Calu3 (cell line): ENCODE measurements at regions of chr7 and their contacts with region 1.

Region 1: DNA sequence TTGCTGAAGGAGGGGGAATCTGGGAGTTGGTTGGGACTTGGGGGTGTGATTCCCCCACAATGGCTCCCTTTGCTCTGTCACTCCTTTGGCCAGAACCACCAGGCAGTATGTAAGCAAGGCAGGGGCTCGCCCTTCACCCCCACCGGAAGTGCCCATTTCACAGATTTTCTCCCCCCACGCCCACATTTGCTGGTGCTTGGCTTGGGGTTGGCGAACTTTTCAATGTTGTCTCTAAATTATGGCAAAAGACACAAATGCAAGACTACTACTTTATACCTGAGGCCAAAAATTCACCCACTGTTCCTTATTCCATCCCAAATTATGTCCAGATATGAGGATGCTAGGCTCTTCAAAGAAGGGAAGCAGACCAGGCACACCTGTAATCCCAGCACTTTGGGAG is 24.5 kb downstream of the RBAK start:
- DNase-seq: no peak
- H3K4me3 Mint-ChIP-seq: no peak overlapping the region
- H3K27ac Mint-ChIP-seq: no peak overlapping the region
- H3K4me1 Mint-ChIP-seq: peaks cover 13% of the 10 kb centered on the region
- H3K27me3 Mint-ChIP-seq: peaks cover 35% of the 10 kb centered on the region
- CTCF ChIP-seq: no peak

Region 2: GRCh38 chr7:4945949-4946348 is 124.3 kb before region 1 on chr7:
- CTCF ChIA-PET with region 1: no interaction called
- intact Hi-C with region 1: no loop called
- DNase-seq: no peak
- H3K4me3 Mint-ChIP-seq: no peak overlapping the region
- H3K27ac Mint-ChIP-seq: no peak overlapping the region
- H3K4me1 Mint-ChIP-seq: no peaks in the 10 kb centered on the region
- H3K27me3 Mint-ChIP-seq: peaks cover 81% of the 10 kb centered on the region
- CTCF ChIP-seq: no peak

Region 3: GRCh38 chr7:5132539-5132938 is 62.3 kb after region 1 on chr7:
- CTCF ChIA-PET with region 1: interaction called, 13 read pairs
- intact Hi-C with region 1: no loop called
- DNase-seq: no peak
- H3K4me3 Mint-ChIP-seq: no peak overlapping the region
- H3K27ac Mint-ChIP-seq: no peak overlapping the region
- H3K4me1 Mint-ChIP-seq: no peaks in the 10 kb centered on the region
- H3K27me3 Mint-ChIP-seq: peaks cover 38% of the 10 kb centered on the region
- CTCF ChIP-seq: no peak